ENCODE measurements at regions of chr11 and their contacts with region 1.

Region 1: DNA sequence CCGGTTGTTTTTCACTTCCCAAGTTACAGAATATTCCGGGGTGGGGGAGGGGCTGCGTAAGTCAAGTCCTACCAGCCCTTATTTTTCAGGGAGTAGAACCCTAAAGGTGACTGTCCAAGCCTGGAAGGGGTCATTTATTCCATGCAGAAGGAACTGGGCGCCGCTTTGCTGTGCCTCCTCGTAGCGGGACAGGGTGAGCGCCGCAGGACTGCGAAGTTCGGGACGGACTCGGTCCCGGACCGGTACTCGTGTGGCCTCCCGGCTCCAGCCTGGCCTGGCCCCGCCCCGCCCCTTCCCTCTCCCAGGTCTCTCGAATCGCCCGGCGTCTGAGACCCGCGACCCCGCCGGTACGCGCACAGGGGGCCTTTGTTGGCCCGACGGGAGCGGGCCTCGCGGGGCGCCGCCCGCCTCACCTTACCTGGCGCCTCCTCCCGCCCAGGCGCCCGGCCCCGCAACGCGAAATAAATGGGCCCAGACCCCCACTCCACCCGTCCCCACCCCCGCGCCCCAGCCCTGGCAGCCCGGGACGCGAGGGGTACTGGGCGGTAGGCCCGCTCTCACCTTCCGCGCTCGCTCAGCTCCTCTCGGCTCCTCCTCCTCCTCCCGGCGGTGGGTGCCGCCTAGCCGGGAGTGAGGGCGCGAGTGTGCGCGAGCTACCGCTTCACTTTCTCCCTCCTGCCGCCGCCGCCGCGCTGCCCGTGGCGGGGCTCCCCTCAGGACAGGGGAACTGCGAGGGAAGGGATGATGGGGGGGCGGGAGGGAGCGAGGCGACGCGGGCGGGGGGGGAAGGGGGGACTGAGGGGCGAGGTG is 698 bp downstream of the PAK1 start:
- DNase-seq: peak; percentile 76
- ATAC-seq: peak; percentile 72
- H3K4me3 Mint-ChIP-seq: peak overlapping the region; percentile 91
- H3K27ac Mint-ChIP-seq: peak overlapping the region; percentile 89
- H3K4me1 Mint-ChIP-seq: peaks cover 29% of the 10 kb centered on the region
- H3K27me3 Mint-ChIP-seq: peaks cover 12% of the 10 kb centered on the region

Region 2: DNA sequence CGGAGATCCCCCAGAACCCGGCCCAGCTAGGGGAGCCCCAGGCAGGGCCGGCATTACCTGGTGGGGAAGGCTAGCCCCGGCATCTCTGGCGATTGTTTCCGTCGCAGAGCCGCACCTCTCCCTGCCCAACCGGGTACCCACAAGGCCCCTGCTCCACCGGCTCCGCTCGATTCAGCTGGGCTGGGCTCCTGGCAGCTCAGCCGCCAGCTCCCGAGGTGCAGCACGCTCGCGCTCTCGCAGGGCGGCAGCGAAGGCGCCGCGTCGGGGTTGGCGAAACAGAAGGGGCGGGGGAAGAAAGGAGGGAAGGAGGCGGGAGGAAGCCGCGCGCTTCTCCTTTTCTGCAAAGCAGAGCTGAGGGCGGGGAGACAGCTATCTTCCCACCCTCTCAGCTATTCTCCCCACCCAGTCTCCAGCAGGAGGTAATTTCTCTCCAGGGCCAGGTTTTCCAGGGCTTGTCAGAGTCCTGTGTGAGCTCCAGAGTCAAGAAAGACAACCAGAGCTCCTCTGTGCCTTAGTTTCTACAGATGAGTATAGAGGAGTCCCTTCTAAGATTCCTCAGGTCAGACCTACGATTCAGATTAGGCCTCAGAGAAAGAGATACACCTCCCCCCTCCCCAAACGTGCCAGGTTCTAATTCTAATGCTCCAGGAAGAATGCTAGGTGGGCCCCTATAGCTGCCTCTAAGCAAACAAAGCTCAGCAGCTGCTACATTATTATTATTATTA is 61.3 kb before region 1 on chr11:
- POLR2A ChIA-PET with region 1: interaction called, 14 read pairs
- DNase-seq: peak; percentile 83
- ATAC-seq: peak; percentile 97
- H3K4me3 Mint-ChIP-seq: peak overlapping the region; percentile 95
- H3K27ac Mint-ChIP-seq: peak overlapping the region; percentile 93
- H3K4me1 Mint-ChIP-seq: peaks cover 49% of the 10 kb centered on the region
- H3K27me3 Mint-ChIP-seq: no peaks in the 10 kb centered on the region